Mammary epithelial cell (primary cell): ENCODE measurements at regions of chr17 and their contacts with region 1.

Region 1: GRCh38 chr17:66255112-66255511 is 25.9 kb upstream of the APOH start:
- DNase-seq: peak; percentile 69
- H3K4me3 ChIP-seq: no peak overlapping the region
- H3K27ac ChIP-seq: no peak overlapping the region
- H3K4me1 ChIP-seq: no peaks in the 10 kb centered on the region
- H3K27me3 ChIP-seq: no peaks in the 10 kb centered on the region
- CTCF ChIP-seq: peak; percentile 68 to 75

Region 2: GRCh38 chr17:66214884-66215528 is 40.1 kb before region 1 on chr17:
- CTCF ChIA-PET with region 1: no interaction called
- dilution Hi-C with region 1: no loop called
- in situ Hi-C with region 1: no loop called
- intact Hi-C with region 1: no loop called
- DNase-seq: no peak
- H3K4me3 ChIP-seq: no peak overlapping the region
- H3K27ac ChIP-seq: no peak overlapping the region
- H3K4me1 ChIP-seq: no peaks in the 10 kb centered on the region
- H3K27me3 ChIP-seq: no peaks in the 10 kb centered on the region
- CTCF ChIP-seq: no peak

Region 3: DNA sequence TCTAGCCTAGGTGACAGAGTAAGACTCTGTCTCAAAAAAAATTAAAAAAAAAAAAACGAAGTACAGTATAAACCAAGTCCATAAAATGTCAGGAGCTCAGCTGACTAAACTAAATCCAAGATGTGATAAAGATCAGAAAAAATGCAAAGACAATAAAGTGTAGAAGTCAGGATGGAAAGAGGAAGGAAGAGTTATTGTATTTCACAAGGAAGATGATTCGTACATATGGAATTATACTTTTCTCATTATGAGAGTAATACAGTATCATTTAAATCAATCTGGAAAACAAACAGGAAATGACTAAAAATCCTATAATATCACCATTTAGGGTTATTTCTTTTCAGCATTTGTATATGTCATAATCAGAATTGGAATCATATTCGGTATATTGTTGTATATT is 14.5 kb before region 1 on chr17:
- CTCF ChIA-PET with region 1: no interaction called
- dilution Hi-C with region 1: no loop called
- in situ Hi-C with region 1: no loop called
- intact Hi-C with region 1: no loop called
- DNase-seq: peak; percentile 57
- H3K4me3 ChIP-seq: no peak overlapping the region
- H3K27ac ChIP-seq: no peak overlapping the region
- H3K4me1 ChIP-seq: no peaks in the 10 kb centered on the region
- H3K27me3 ChIP-seq: no peaks in the 10 kb centered on the region
- CTCF ChIP-seq: no peak

Region 4: DNA sequence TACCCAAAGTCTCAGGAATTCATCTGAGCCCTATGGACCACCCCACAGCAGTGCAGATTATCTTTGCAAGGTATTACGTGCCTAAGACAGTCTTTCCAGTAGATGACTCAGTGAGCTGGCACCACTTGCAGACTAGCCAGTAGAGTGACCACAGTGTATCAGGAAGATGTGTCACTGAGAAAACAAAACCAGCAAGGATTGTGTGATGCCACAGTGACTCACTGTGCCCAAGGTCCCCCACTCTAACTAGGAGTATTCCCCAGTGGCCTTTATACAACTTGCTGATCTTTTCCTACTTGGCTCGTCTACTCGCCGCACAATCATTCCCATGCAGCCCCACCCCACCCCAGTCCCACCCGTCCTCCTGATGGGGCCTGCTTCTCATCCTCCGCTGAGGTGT is 20.5 kb after region 1 on chr17:
- CTCF ChIA-PET with region 1: no interaction called
- dilution Hi-C with region 1: no loop called
- in situ Hi-C with region 1: no loop called
- intact Hi-C with region 1: loop called (anchors 1 kb)
- DNase-seq: peak; percentile 94
- H3K4me3 ChIP-seq: no peak overlapping the region
- H3K27ac ChIP-seq: no peak overlapping the region
- H3K4me1 ChIP-seq: peaks cover 36% of the 10 kb centered on the region
- H3K27me3 ChIP-seq: no peaks in the 10 kb centered on the region
- CTCF ChIP-seq: peak in 1 of 2 donors; percentile 24

Region 5: DNA sequence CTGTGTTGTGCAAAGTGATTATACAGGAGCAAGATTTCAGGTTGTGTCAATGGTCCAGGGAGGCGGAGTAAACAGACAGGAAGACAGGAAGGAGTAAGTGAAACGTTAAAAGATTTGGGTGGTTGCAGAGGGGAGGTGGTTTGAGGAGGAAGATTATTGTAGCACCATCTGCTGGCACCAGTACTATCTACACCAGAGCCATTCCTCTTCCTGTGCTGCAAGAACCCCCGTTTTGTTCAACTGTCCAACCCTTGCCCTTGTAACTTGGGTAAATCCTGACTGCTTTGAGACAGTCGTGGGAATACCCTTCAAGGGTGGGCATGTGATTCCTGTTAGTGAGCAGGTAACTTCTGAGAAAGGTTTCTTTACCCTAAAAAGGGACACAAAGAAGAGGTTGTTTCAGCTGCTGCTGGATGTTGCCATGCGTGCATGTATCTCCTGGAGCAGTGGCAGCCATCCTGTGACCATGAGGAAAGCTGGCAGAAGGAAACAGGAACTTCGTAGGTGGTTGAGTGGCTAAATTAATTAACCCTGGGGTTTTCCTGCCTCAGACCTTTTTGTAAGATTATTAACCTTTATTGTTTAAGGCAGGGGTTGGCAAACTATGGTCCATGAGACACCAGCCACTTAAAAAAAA is 171.4 kb after region 1 on chr17:
- CTCF ChIA-PET with region 1: no interaction called
- dilution Hi-C with region 1: no loop called
- in situ Hi-C with region 1: no loop called
- intact Hi-C with region 1: loop called (anchors 1 kb)
- DNase-seq: no peak
- H3K4me3 ChIP-seq: no peak overlapping the region
- H3K27ac ChIP-seq: no peak overlapping the region
- H3K4me1 ChIP-seq: peaks cover 16% of the 10 kb centered on the region
- H3K27me3 ChIP-seq: no peaks in the 10 kb centered on the region
- CTCF ChIP-seq: peak in 1 of 2 donors; percentile 44

Region 6: DNA sequence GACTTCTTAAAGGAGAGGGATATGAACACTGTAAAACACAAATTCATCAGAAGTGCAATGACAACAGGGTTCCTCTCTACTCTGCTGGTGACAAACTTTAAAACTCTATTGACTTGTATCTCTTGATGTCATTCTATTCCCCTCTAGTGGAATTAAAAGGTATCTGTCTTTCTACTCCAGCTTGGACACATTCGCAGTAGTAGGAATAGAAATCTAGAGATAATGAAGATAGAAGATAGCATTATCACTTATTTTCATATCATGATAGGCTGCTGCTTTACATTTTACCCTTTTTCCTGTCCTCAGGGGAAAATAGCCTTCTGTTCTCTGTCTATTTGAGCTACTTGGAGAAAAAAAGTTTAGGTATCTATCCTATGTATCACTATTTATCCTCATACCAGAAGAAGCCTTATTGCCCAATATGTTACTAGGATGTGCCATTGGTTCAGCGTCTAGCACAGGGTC is 370.2 kb after region 1 on chr17:
- CTCF ChIA-PET with region 1: no interaction called
- dilution Hi-C with region 1: no loop called
- in situ Hi-C with region 1: no loop called
- intact Hi-C with region 1: loop called (anchors 1 kb)
- DNase-seq: peak; percentile 19
- H3K4me3 ChIP-seq: no peak overlapping the region
- H3K27ac ChIP-seq: no peak overlapping the region
- H3K4me1 ChIP-seq: no peaks in the 10 kb centered on the region
- H3K27me3 ChIP-seq: no peaks in the 10 kb centered on the region
- CTCF ChIP-seq: peak; percentile 32 to 50